ENCODE measurements at regions of chr17 and their contacts with region 1.

Region 1: DNA sequence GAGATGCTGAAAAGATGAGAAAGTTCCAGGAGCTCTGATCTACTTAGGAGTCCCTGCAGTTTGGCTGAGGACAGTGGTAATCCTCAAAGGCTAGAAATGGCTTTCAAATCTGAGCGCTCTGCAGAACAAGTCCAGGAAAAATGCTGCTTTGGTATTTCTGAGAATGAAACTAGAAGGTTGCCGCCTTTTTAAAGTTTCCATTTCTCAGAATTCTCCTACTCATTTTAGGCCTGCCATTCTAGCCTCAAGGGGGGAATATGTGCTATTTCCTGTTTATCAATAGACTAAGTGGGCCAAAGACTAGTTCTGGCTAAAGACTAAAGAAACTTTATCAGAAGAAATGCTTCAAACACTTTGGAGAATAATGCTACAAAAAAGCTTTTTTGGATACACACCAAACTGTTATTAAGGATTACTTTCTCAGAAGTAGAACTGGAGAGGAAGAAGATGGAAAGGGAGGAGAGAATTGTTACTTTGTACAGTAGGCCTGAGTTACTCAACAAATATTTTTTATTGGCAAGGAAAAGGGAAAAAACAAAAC is at the start of gene SLFN12L:
- DNase-seq: no peak
- ATAC-seq: no peak
- H3K4me3 ChIP-seq: no peak within 1 kb of the TSS
- H3K27ac ChIP-seq: no peak within 1 kb of the TSS
- H3K4me1 ChIP-seq: peaks cover 0 to 5% of the 10 kb centered on the region in 2 experiments; a peak in 1 of 4 replicates
- H3K27me3 ChIP-seq: no peaks in the 10 kb centered on the region; the same call in 1 of the 2 replicates
- CTCF ChIP-seq: no peak
- POLR2A ChIP-seq: no peak
- RAD21 ChIP-seq: no peak
- total RNA-seq, gene SLFN12L: 0.17 TPM

Region 2: GRCh38 chr17:34998205-34998604 is 539.5 kb before region 1 on chr17:
- CTCF ChIA-PET with region 1: no interaction called
- POLR2A ChIA-PET with region 1: no interaction called
- RAD21 ChIA-PET with region 1: no interaction called
- intact Hi-C with region 1: loop called (anchors 5 kb)
- DNase-seq: peak; percentile 38
- ATAC-seq: peak; percentile 97
- H3K4me3 ChIP-seq: no peak overlapping the region
- H3K27ac ChIP-seq: no peak overlapping the region
- H3K4me1 ChIP-seq: no peaks in the 10 kb centered on the region
- H3K27me3 ChIP-seq: no peaks in the 10 kb centered on the region
- CTCF ChIP-seq: peak; percentile 84 to 93 (median 87)
- POLR2A ChIP-seq: no peak
- RAD21 ChIP-seq: peak; percentile 95

Region 3: DNA sequence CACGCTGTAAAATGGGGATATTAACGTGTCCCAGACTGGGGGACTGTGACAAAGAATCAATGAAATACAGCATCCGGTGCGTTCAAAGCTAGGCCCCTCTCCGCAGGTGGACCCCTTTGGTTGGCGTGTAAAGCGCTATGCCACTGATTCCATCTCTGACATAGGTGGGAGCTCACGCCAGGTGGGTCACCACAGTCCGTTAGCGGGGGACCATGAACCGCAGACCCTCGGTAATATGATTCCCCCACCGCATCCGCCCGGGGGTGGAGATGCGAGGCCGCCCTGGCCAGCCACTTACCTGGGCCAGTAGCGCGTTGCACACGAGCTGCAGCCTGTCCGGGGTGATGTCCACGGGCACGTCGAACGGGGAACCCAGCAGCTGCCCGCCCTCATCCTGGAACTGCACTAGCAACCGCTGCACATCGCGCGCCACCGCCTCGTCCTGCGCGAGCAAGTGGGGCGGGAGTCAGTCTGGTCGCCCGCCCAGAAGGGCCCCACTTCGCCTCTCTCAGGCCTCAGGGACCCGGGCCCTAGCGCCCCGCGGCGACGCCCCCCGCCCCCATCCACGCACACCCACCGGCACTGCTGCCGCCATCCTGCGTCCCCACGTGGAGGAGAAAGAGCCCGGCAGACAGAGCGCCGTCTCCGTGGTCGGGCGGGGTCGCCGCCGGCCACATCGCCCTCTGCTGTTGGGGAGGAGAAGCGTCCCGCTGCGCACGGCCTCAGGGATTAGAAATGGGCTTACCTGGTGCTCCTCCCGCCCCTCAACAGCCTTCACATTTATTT is 395.8 kb before region 1 on chr17 and contains the start of gene NLE1:
- CTCF ChIA-PET with region 1: interaction called, 3 read pairs
- POLR2A ChIA-PET with region 1: no interaction called
- RAD21 ChIA-PET with region 1: no interaction called
- intact Hi-C with region 1: loop called (anchors 1 kb)
- DNase-seq: peak; percentile 71
- ATAC-seq: peak; percentile 93
- H3K4me3 ChIP-seq: peak within 1 kb of the TSS; percentile 97 to 99
- H3K27ac ChIP-seq: peak within 1 kb of the TSS; percentile 70
- H3K4me1 ChIP-seq: peaks cover 3 to 10% of the 10 kb centered on the region in 2 experiments; a peak in 3 of 4 replicates
- H3K27me3 ChIP-seq: no peaks in the 10 kb centered on the region
- CTCF ChIP-seq: peak; percentile 63 to 83 (median 83)
- POLR2A ChIP-seq: no peak
- RAD21 ChIP-seq: peak; percentile 41
- total RNA-seq, gene NLE1: 55.5 TPM

Region 4: GRCh38 chr17:35170968-35171771 is 366.5 kb before region 1 on chr17:
- CTCF ChIA-PET with region 1: interaction called, 7 read pairs
- POLR2A ChIA-PET with region 1: no interaction called
- RAD21 ChIA-PET with region 1: no interaction called
- intact Hi-C with region 1: loop called (anchors 1 kb)
- DNase-seq: no peak
- ATAC-seq: no peak; the same call in 1 of the 2 replicates
- H3K4me3 ChIP-seq: no peak overlapping the region
- H3K27ac ChIP-seq: no peak overlapping the region
- H3K4me1 ChIP-seq: no peaks in the 10 kb centered on the region
- H3K27me3 ChIP-seq: peaks cover 6% of the 10 kb centered on the region; the same call in 1 of the 2 replicates
- CTCF ChIP-seq: peak in 2 of 3 experiments; percentile 13 to 21; a peak in 2 of 6 replicates
- POLR2A ChIP-seq: no peak
- RAD21 ChIP-seq: peak; percentile 48

Region 5: GRCh38 chr17:35257208-35257659 is 280.4 kb before region 1 on chr17:
- CTCF ChIA-PET with region 1: interaction called, 3 read pairs
- POLR2A ChIA-PET with region 1: no interaction called
- RAD21 ChIA-PET with region 1: no interaction called
- intact Hi-C with region 1: loop called (anchors 5 kb)
- DNase-seq: peak; percentile 59
- ATAC-seq: peak; percentile 46
- H3K4me3 ChIP-seq: no peak overlapping the region
- H3K27ac ChIP-seq: peak overlapping the region; percentile 34; the same call in 1 of the 2 replicates
- H3K4me1 ChIP-seq: peaks cover 36 to 46% of the 10 kb centered on the region in 2 experiments
- H3K27me3 ChIP-seq: peaks cover 6% of the 10 kb centered on the region; the same call in 1 of the 2 replicates
- CTCF ChIP-seq: no peak
- POLR2A ChIP-seq: no peak
- RAD21 ChIP-seq: no peak

Region 6: GRCh38 chr17:35312790-35313711 is 224.6 kb before region 1 on chr17:
- CTCF ChIA-PET with region 1: interaction called, 37 read pairs
- POLR2A ChIA-PET with region 1: no interaction called
- RAD21 ChIA-PET with region 1: interaction called in 1 of 2 experiments, 4 read pairs
- intact Hi-C with region 1: loop called (anchors 1 kb)
- DNase-seq: peak; percentile 37
- ATAC-seq: peak; percentile 98
- H3K4me3 ChIP-seq: no peak overlapping the region
- H3K27ac ChIP-seq: no peak overlapping the region
- H3K4me1 ChIP-seq: peaks cover 5 to 9% of the 10 kb centered on the region in 2 experiments; a peak in 3 of 4 replicates
- H3K27me3 ChIP-seq: 0 out of 2 replicates have a peak, but pooled peaks cover 9% of the 10 kb centered on the region
- CTCF ChIP-seq: peak; percentile 70 to 83 (median 74)
- POLR2A ChIP-seq: no peak
- RAD21 ChIP-seq: peak; percentile 75

Region 7: DNA sequence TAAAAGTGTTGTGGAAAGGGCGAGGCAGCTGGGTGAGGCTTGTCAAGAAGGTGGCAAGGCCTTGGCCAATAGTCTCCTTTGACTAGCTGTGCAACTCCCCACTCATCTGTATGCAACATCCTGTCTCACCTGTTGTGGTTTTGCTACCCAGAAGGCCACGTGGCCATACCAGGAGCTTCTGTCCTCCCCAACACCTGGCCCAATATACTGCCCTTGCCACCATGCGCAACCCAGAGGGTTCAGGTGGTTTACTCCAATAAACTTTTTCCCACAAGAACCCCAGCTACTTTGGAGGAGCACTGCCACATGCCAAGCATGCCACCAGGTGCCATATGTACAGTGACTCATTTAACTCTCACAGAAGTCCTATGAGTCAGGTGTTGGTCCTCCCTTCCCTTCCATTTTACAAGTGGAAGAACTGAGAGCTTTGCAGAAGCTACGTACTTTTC is 986.8 kb after region 1 on chr17:
- CTCF ChIA-PET with region 1: no interaction called
- POLR2A ChIA-PET with region 1: no interaction called
- RAD21 ChIA-PET with region 1: no interaction called
- intact Hi-C with region 1: no loop called
- DNase-seq: no peak
- ATAC-seq: peak; percentile 44; the same call in 1 of the 2 replicates
- H3K4me3 ChIP-seq: no peak overlapping the region
- H3K27ac ChIP-seq: no peak overlapping the region
- H3K4me1 ChIP-seq: peaks cover 0 to 5% of the 10 kb centered on the region in 2 experiments; a peak in 2 of 4 replicates
- H3K27me3 ChIP-seq: no peaks in the 10 kb centered on the region
- CTCF ChIP-seq: no peak
- POLR2A ChIP-seq: no peak
- RAD21 ChIP-seq: no peak